Heart left ventricle (tissue), 16 donors: ENCODE measurements at regions of chr1 and their contacts with region 1.

Region 1: DNA sequence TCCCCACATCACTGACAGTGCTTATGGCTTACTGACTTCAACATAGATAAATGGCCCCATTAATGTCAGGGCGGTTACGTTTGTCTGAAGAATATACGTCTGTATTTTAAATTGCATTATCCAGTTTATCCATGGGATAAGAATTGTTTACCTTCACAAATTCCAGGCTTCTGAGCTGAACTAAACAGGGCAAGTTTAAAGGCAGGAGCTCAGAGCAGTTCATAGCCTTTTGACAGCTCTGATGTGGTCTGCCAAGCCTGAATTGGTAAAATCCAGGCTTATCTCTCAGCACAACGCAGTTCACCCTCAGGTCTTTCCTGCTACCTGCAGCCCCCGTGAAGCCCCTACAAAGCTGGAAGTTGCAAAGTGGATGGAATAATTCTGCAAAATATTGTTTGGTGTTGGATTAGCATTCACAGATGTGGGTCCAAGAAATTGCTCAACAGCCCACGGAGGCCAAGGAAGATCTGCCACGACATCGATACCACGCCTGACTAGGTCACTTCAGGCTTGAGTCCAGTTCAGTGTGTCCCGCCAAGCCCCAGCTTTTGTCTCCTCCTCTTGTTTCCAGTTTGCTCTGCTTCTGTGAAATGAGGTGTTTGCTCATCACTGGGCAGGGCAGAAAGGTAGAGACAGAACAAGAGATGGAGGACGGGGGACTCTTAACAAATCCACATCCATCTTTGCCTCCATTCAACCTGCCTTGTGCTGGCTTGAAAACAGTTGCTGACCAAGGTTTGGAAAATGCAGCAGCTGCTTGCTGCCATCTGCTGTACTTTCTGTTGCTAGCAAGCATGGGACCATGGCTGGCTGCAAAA is 79.8 kb upstream of the GREM2 start:
- DNase-seq: no peak
- ATAC-seq: no peak
- H3K4me3 ChIP-seq: no peak overlapping the region
- H3K27ac ChIP-seq: peak overlapping the region in 1 of 12 donors; percentile 8
- H3K4me1 ChIP-seq: no peaks in the 10 kb centered on the region
- H3K27me3 ChIP-seq: no peaks in the 10 kb centered on the region
- CTCF ChIP-seq: peak in 11 of 12 donors; percentile 16 to 48 (median 31)
- POLR2A ChIP-seq: no peak

Region 2: GRCh38 chr1:239951511-239952140 is 740.1 kb before region 1 on chr1:
- intact Hi-C with region 1: loop called in 1 of 10 experiments (anchors 10 kb)
- DNase-seq: peak in 3 of 5 donors; percentile 30 to 51 (median 39)
- ATAC-seq: peak in 1 of 4 donors; percentile 59
- H3K4me3 ChIP-seq: no peak overlapping the region
- H3K27ac ChIP-seq: no peak overlapping the region
- H3K4me1 ChIP-seq: no peaks in the 10 kb centered on the region
- H3K27me3 ChIP-seq: peaks cover 0 to 17% (median 0%) of the 10 kb centered on the region in 9 donors
- CTCF ChIP-seq: peak; percentile 57 to 87 (median 74)
- POLR2A ChIP-seq: no peak

Region 3: DNA sequence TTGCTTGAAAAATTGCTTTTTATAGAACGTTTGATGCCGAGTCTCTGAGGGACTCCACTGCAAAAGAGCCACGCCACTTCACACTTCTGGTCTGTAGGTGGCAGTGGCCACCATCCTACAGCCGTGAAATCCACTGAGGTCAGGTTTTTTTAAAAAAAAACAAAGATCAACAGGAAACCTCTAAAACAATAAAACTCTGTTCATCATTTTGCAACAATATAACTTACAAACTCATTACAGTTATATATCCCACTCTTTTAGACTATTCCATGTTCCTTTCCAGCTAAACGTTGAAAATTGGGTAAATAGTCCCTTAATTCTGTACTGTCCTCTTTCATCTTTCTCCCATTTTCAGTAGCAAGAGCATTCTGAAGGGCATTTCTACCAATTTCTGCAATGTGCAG is 664.7 kb before region 1 on chr1:
- intact Hi-C with region 1: loop called in 1 of 10 experiments (anchors 5 kb)
- DNase-seq: no peak
- ATAC-seq: no peak
- H3K4me3 ChIP-seq: no peak overlapping the region
- H3K27ac ChIP-seq: no peak overlapping the region
- H3K4me1 ChIP-seq: no peaks in the 10 kb centered on the region
- H3K27me3 ChIP-seq: peaks cover 0 to 8% (median 0%) of the 10 kb centered on the region in 9 donors
- CTCF ChIP-seq: peak; percentile 61 to 84 (median 75)
- POLR2A ChIP-seq: no peak

Region 4: GRCh38 chr1:240190881-240191401 is 500.8 kb before region 1 on chr1:
- intact Hi-C with region 1: loop called in 4 of 10 experiments (anchors 5 to 10 kb)
- DNase-seq: no peak
- ATAC-seq: no peak
- H3K4me3 ChIP-seq: no peak overlapping the region
- H3K27ac ChIP-seq: no peak overlapping the region
- H3K4me1 ChIP-seq: no peaks in the 10 kb centered on the region
- H3K27me3 ChIP-seq: peaks cover 0 to 19% (median 0%) of the 10 kb centered on the region in 9 donors
- CTCF ChIP-seq: peak in 4 of 12 donors; percentile 23 to 37 (median 32)
- POLR2A ChIP-seq: no peak